ENCODE measurements at regions of chr4 and their contacts with region 1.

Region 1: DNA sequence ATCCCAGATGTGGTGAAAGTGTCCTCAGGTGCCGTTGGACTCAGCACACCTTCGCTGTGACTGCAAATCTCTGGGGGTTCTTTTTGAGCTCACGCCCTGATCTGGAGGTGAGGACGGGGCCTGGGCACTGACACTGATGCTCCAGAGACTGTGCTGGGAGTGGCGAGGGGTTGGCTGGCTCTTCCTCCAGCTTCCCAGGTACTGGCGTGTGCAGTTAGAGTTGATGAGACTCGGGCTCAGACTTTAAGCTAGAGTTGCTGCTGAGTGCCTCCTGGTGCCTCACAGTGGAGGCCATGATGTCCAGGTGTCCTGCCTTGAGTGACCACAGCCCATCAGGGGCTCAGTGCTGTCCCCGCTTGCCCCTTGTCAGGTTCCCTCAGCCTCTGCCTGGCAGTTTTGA is 16.3 kb downstream of the SPON2 start:
- DNase-seq: no peak
- H3K4me3 Mint-ChIP-seq: no peak overlapping the region
- H3K27ac Mint-ChIP-seq: no peak overlapping the region
- H3K4me1 Mint-ChIP-seq: no peaks in the 10 kb centered on the region
- H3K27me3 Mint-ChIP-seq: peaks cover 11% of the 10 kb centered on the region

Region 2: GRCh38 chr4:1021386-1022050 is 134.6 kb before region 1 on chr4:
- CTCF ChIA-PET with region 1: no interaction called
- intact Hi-C with region 1: no loop called
- DNase-seq: no peak
- H3K4me3 Mint-ChIP-seq: no peak overlapping the region
- H3K27ac Mint-ChIP-seq: no peak overlapping the region
- H3K4me1 Mint-ChIP-seq: peaks cover 7% of the 10 kb centered on the region
- H3K27me3 Mint-ChIP-seq: no peaks in the 10 kb centered on the region

Region 3: DNA sequence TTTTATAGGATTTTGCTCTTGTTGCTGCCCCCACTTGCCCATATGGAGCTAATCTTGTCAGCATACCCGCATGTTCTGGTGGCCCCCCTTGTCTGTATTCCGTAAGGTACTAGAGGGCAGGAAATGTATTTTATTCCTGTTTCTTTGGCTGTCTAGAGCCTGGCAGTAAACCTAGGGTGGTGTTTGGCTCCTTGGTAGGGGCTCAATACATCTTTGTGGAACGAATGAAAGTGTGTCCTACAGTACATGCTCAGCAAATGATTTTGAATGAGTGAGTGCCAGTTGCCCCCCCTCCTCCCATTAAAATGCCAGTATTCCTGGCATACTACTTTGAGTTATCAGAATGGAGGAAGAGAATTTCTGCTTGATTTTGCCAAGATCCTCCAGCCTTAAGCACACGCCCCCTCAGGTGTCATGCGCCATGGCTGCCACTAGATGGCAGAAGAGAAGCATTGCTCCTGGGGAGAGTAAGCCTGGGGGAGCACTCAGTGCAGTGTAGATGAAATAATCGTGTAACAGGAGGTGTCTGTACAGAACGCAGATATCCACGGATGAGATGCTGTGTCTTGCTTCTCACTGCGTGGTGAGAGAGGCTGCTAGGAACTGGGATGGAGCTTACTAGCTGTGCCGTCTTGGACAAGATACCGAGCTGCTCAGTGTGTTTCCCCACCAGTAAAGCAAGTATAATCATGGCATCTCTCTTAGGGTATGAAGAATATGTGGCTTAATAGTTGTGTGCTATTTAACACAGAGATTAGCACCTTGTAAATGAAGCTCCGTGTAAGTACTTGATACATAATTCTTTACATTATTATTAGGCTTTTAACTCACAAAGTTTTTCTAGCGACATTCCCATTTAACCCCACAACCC is 25.5 kb before region 1 on chr4:
- CTCF ChIA-PET with region 1: interaction called, 22 read pairs
- intact Hi-C with region 1: no loop called
- DNase-seq: peak; percentile 80
- H3K4me3 Mint-ChIP-seq: no peak overlapping the region
- H3K27ac Mint-ChIP-seq: no peak overlapping the region
- H3K4me1 Mint-ChIP-seq: peaks cover 2% of the 10 kb centered on the region
- H3K27me3 Mint-ChIP-seq: peaks cover 4% of the 10 kb centered on the region